ENCODE measurements at regions of chr17 and their contacts with region 1.

Region 1: GRCh38 chr17:65027305-65027704 is 29.2 kb downstream of the GNA13 start:
- DNase-seq: no peak
- H3K4me3 ChIP-seq: no peak overlapping the region
- H3K27ac ChIP-seq: no peak overlapping the region
- H3K4me1 ChIP-seq: peaks cover 0 to 3% of the 10 kb centered on the region in 2 donors
- H3K27me3 ChIP-seq: no peaks in the 10 kb centered on the region
- CTCF ChIP-seq: no peak
- POLR2A ChIP-seq: no peak

Region 2: GRCh38 chr17:65011966-65012365 is 15.3 kb before region 1 on chr17:
- intact Hi-C with region 1: loop called (anchors 1 kb)
- DNase-seq: no peak
- H3K4me3 ChIP-seq: no peak overlapping the region
- H3K27ac ChIP-seq: no peak overlapping the region
- H3K4me1 ChIP-seq: peaks cover 0 to 2% of the 10 kb centered on the region in 2 donors
- H3K27me3 ChIP-seq: no peaks in the 10 kb centered on the region
- CTCF ChIP-seq: no peak
- POLR2A ChIP-seq: no peak

Region 3: DNA sequence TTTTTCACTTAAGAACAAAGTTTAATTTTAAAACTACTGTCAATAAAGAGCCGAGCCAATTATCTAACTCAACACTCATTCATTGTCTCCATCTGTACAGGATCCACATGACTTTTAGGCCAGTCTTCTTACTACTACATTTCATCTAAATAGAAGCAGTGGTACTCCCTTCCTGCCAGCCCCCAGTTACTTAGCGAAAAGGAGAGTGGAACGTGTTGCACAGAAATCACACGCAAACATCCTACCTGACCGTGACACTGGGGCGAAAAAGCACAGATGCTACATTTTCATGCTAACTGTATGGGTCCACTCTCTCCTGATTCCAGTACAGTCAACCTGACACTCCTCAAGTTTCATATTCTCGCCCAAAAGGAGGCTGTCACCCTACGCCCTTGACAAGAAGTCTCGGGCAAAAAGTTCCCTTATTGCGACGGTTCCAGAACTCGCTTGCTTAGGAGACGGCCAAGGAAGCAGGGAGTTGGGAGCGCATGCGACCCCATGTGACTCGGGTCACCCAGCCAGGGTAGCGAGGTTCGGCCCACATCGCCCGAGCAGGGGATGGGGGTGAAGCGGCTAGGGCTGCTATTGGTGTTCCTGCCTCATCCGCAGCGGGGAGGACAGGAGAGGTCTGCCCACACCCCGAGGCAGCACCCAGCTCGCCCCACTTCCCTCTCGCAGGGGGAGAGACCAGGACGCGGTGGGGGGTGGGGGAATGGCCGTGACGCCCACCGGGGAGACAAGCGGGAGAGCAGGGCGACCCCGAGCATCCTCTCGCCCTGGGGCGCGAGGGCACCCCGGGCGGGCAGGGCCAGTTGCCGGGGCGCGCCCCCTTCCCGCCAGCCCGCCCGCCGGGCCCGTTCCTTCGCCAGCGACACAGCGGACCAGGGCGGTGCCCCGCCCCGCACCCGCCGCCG is 28.3 kb after region 1 on chr17:
- intact Hi-C with region 1: no loop called
- DNase-seq: peak; percentile 64 to 68
- H3K4me3 ChIP-seq: peak overlapping the region; percentile 82 to 96 (median 94)
- H3K27ac ChIP-seq: peak overlapping the region; percentile 98 to 100
- H3K4me1 ChIP-seq: peaks cover 0 to 26% of the 10 kb centered on the region in 2 donors
- H3K27me3 ChIP-seq: no peaks in the 10 kb centered on the region
- CTCF ChIP-seq: no peak
- POLR2A ChIP-seq: no peak

Region 4: DNA sequence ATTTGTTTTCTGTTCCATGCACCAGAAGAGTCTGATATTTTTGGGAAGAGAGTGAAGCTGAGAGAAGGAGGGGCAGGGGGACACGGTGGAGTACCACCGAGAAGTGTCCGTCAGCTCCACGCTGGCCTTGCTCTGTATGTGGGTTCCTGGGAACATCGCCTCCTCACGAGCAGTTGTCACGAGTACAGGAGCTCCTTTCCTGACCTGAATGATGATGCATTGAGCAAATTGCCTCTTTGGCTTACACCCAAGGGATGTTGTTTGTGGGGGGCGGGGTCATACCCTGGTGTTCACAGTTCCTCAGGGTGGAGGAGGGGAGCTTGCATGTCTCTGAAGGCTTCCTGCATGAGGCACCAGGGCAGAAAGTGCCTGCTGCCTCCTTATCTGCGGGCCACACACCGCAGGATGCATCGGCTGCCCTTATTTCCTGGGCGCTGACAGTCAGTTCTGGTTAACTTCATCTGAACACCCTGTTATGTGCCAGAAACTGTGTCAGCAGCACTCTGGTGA is 146.0 kb after region 1 on chr17:
- intact Hi-C with region 1: no loop called
- DNase-seq: peak in 1 of 2 donors; percentile 26
- H3K4me3 ChIP-seq: no peak overlapping the region
- H3K27ac ChIP-seq: no peak overlapping the region
- H3K4me1 ChIP-seq: no peaks in the 10 kb centered on the region
- H3K27me3 ChIP-seq: no peaks in the 10 kb centered on the region
- CTCF ChIP-seq: no peak
- POLR2A ChIP-seq: no peak

Measured in breast epithelium (tissue), 4 donors.